Activated CD4-positive, alpha-beta T cell treated with anti-CD3 and anti-CD28 coated beads for 36 hours (primary cell): ENCODE measurements at regions of chr2 and their contacts with region 1.

Region 1: DNA sequence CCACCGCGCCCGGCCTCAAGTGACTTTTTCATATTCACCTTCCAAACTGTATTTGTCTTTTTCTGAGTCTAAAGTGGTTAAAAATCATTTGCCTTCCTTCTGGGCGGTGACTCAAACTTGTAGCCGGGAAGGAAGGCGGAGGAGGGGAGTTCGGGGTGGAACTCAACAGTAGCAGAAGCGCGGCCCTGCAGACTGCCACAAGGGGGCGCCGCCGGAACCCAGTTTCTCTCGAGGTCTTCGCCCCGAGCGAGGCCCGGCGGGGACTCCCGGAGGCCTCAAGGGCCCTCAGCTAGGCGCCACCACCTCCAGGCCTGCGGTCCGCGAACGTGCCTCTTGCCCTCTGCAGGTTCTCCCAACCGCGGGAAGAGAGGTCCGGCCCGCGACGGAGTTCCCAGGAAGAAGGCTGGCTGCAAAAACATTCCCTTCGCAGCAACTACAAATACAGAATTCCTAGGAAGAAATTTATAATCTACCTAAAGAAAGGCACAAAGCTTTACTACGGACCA is 16.8 kb upstream of the ITM2C start:
- DNase-seq: peak; percentile 98
- ATAC-seq: peak; percentile 97
- H3K4me3 Mint-ChIP-seq: no peak overlapping the region
- H3K27ac Mint-ChIP-seq: peak overlapping the region; percentile 47
- H3K4me1 Mint-ChIP-seq: peaks cover 18% of the 10 kb centered on the region
- H3K27me3 Mint-ChIP-seq: peaks cover 19% of the 10 kb centered on the region

Region 2: GRCh38 chr2:230864598-230865306 is 16.8 kb after region 1 on chr2 and contains the start of gene ITM2C:
- CTCF ChIA-PET with region 1: interaction called, 19 read pairs
- POLR2A ChIA-PET with region 1: no interaction called
- intact Hi-C with region 1: loop called in 1 of 2 experiments (anchors 1 kb)
- DNase-seq: peak; percentile 89
- ATAC-seq: peak; percentile 86
- H3K4me3 Mint-ChIP-seq: peak within 1 kb of the TSS; percentile 84
- H3K27ac Mint-ChIP-seq: peak within 1 kb of the TSS; percentile 82
- H3K4me1 Mint-ChIP-seq: peaks cover 50% of the 10 kb centered on the region
- H3K27me3 Mint-ChIP-seq: peaks cover 5% of the 10 kb centered on the region
- total RNA-seq, gene ITM2C: 29.6 to 32.9 TPM

Region 3: GRCh38 chr2:230893841-230894781 is 46.2 kb after region 1 on chr2:
- CTCF ChIA-PET with region 1: interaction called, 12 read pairs
- POLR2A ChIA-PET with region 1: no interaction called
- intact Hi-C with region 1: no loop called
- DNase-seq: no peak
- ATAC-seq: peak; percentile 68
- H3K4me3 Mint-ChIP-seq: no peak overlapping the region
- H3K27ac Mint-ChIP-seq: no peak overlapping the region
- H3K4me1 Mint-ChIP-seq: peaks cover 16% of the 10 kb centered on the region
- H3K27me3 Mint-ChIP-seq: peaks cover 10% of the 10 kb centered on the region